Calu3 (cell line): ENCODE measurements at regions of chr1 and their contacts with region 1.

Region 1: GRCh38 chr1:121525355-121525754 is 340.6 kb downstream of the SRGAP2C start:
- DNase-seq: no peak
- H3K4me3 Mint-ChIP-seq: no peak overlapping the region
- H3K27ac Mint-ChIP-seq: no peak overlapping the region
- H3K4me1 Mint-ChIP-seq: peaks cover 23% of the 10 kb centered on the region
- H3K27me3 Mint-ChIP-seq: no peaks in the 10 kb centered on the region
- CTCF ChIP-seq: no peak

Region 2: DNA sequence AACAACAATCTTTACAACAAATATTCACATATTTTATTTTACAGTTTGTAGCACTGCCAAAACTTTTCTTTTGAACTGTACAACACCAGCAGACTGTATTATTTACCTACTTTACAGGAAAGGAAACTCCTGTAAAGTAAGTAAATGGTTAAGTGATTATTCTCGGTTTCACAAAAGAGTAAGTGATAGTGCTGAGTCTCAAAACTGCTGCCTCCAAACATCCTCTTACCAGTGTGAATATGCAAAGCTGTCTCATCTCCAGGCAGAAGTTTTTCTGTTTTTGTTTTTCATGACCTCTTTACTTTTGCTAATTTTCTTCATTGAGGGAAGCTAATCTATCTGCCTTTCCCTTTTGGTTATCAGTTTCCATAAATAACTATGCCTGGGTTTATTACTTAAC is 53.8 kb before region 1 on chr1:
- CTCF ChIA-PET with region 1: no interaction called
- intact Hi-C with region 1: no loop called
- DNase-seq: no peak
- H3K4me3 Mint-ChIP-seq: no peak overlapping the region
- H3K27ac Mint-ChIP-seq: no peak overlapping the region
- H3K4me1 Mint-ChIP-seq: no peaks in the 10 kb centered on the region
- H3K27me3 Mint-ChIP-seq: no peaks in the 10 kb centered on the region
- CTCF ChIP-seq: no peak

Region 3: DNA sequence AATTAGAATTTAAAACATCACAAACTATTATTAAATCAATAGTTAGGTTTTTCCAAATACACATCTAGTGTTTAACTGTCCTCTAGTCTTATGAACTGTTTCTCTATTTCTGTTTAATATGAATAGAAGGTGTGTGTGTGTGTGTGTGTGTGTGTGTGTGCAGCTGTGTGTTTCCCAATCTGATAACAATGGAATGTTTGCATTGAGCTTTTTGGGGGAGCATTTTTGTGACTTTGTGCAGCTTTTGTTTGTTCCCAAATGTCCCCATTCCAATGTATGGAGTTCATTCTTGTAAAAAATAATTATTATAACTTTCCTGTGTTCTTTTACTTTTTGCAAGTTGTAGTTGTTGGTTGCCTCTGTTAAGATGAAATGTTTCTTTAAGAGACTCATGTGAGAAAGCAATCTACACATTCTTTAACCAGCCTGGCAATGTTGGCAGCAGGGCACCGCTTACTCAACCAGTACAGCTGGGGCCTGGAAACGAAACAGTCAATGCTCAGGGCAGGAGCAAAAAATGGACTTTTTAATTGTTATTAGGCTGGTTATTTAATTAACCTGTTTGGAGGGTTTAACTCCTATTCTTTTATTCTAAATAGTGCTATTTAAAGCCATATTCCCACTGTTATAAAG is 13.7 kb after region 1 on chr1:
- CTCF ChIA-PET with region 1: no interaction called
- intact Hi-C with region 1: no loop called
- DNase-seq: no peak
- H3K4me3 Mint-ChIP-seq: no peak overlapping the region
- H3K27ac Mint-ChIP-seq: peak overlapping the region; percentile 17
- H3K4me1 Mint-ChIP-seq: peaks cover 11% of the 10 kb centered on the region
- H3K27me3 Mint-ChIP-seq: no peaks in the 10 kb centered on the region
- CTCF ChIP-seq: no peak

Region 4: DNA sequence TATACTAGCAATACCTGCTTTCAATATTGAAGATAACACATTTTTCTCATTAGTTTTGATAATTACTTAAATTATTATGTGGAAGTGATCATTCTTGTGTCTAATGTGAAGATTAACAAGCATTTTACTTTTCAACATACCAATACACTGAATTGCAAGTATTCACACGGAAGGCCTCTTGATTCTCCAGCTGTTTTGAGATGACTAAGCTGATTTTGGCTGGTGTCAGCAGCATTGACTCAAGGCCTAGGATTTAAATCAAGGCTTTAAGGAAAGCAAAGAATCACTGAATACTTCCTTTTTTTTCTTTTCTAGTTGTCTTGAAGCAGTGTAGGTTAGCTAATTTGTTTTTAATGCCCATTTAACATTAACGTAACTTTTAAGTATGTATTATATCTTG is 33.2 kb after region 1 on chr1:
- CTCF ChIA-PET with region 1: no interaction called
- intact Hi-C with region 1: loop called (anchors 5 kb)
- DNase-seq: no peak
- H3K4me3 Mint-ChIP-seq: no peak overlapping the region
- H3K27ac Mint-ChIP-seq: no peak overlapping the region
- H3K4me1 Mint-ChIP-seq: no peaks in the 10 kb centered on the region
- H3K27me3 Mint-ChIP-seq: no peaks in the 10 kb centered on the region
- CTCF ChIP-seq: no peak